ENCODE measurements at regions of chr3 and their contacts with region 1.

Region 1: DNA sequence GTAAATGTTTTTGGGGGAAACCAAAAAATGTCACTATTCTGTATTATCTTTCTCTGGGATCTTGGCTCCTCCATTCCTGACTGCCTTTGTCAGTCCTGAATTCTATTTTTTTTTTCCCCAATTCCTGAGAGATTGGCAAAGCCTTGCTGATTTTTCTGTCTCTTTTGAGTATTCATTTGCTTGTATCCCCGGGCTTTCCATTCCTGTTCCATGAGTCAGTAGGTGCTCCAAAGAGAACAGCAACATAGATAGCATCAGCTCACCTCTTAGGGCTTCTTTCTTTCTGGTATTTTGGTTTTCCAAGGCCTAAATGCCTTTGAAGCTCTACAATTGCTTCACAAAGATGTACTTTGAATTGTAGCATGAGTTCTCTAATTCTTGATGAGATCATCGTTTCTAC is 271.7 kb upstream of the LRRC3B start:
- DNase-seq: no peak
- H3K4me3 Mint-ChIP-seq: no peak overlapping the region
- H3K27ac Mint-ChIP-seq: no peak overlapping the region
- H3K4me1 Mint-ChIP-seq: no peaks in the 10 kb centered on the region
- H3K27me3 Mint-ChIP-seq: no peaks in the 10 kb centered on the region

Region 2: DNA sequence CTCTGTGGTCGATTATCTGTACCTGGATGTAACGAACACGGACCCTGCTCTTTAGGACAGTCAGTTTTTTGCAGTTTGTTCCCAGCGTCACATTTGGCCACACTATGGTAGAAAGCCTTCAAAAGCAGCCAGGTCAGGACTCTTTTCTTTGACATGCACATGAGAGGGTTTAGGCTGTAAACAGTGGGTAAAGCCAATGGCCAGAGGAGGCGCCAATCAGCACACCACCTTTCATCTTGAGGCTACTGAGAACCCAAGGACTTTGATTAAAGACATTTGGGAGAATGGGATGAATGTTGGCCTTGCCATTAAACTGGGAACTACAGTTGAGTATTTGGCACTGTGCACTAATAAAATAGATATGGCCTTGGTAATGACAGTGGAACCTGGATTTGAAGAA is 335.1 kb before region 1 on chr3:
- CTCF ChIA-PET with region 1: no interaction called
- intact Hi-C with region 1: no loop called
- DNase-seq: no peak
- H3K4me3 Mint-ChIP-seq: no peak overlapping the region
- H3K27ac Mint-ChIP-seq: no peak overlapping the region
- H3K4me1 Mint-ChIP-seq: no peaks in the 10 kb centered on the region
- H3K27me3 Mint-ChIP-seq: peaks cover 4% of the 10 kb centered on the region

Region 3: GRCh38 chr3:26484140-26484539 is 133.3 kb after region 1 on chr3:
- CTCF ChIA-PET with region 1: no interaction called
- intact Hi-C with region 1: no loop called
- DNase-seq: no peak
- H3K4me3 Mint-ChIP-seq: no peak overlapping the region
- H3K27ac Mint-ChIP-seq: no peak overlapping the region
- H3K4me1 Mint-ChIP-seq: no peaks in the 10 kb centered on the region
- H3K27me3 Mint-ChIP-seq: no peaks in the 10 kb centered on the region

Region 4: DNA sequence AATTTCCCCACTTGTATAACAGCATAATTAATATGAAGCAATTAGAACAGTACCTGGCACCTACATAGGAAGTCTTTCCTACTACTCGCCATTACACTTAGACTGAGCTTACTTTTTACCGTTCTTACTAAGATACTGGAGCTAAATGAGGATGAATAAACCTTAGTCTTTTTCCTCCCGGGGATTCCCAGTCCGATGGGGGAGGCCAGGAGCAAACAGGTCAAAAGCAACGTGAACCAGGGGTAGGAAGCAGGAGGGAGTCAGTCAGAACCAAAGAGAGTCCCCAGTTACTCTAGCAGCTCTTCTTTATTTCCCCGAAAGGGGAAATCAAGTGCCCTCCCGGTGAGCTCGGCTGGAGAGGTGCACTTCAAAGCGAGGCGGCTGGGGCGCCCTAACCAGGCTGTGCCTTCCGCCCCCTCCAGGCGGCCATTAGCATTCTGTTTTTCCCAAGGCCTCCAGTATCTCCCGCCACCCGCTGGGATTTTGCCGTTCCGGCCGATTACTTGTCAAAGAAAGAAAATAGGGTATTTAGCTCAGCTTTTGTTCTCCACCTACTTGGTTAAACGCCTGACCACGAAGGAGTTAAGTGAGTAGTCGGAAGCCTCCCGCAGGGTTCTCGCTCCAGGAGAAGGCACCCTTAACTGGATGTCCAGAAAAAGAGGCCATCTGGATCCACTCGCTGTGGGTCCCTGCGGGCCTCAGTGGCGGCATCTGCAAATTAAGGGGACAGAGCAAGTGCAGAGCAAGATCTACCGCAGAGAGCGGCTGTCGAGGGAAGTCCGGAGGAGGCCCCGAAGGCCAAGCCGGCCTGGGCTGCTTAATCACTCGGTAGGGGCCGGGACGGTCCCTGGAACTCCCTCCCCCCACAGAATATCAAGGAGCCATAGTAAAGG is 1377.6 kb after region 1 on chr3:
- CTCF ChIA-PET with region 1: no interaction called
- intact Hi-C with region 1: loop called (anchors 5 kb)
- DNase-seq: peak; percentile 39
- H3K4me3 Mint-ChIP-seq: peak overlapping the region; percentile 62
- H3K27ac Mint-ChIP-seq: no peak overlapping the region
- H3K4me1 Mint-ChIP-seq: peaks cover 41% of the 10 kb centered on the region
- H3K27me3 Mint-ChIP-seq: peaks cover 80% of the 10 kb centered on the region

Measured in activated naive CD4-positive, alpha-beta T cell treated with anti-CD3 and anti-CD28 coated beads for 36 hours (primary cell).